WTC11 (cell line): ENCODE measurements at regions of chr5 and their contacts with region 1.

Region 1: DNA sequence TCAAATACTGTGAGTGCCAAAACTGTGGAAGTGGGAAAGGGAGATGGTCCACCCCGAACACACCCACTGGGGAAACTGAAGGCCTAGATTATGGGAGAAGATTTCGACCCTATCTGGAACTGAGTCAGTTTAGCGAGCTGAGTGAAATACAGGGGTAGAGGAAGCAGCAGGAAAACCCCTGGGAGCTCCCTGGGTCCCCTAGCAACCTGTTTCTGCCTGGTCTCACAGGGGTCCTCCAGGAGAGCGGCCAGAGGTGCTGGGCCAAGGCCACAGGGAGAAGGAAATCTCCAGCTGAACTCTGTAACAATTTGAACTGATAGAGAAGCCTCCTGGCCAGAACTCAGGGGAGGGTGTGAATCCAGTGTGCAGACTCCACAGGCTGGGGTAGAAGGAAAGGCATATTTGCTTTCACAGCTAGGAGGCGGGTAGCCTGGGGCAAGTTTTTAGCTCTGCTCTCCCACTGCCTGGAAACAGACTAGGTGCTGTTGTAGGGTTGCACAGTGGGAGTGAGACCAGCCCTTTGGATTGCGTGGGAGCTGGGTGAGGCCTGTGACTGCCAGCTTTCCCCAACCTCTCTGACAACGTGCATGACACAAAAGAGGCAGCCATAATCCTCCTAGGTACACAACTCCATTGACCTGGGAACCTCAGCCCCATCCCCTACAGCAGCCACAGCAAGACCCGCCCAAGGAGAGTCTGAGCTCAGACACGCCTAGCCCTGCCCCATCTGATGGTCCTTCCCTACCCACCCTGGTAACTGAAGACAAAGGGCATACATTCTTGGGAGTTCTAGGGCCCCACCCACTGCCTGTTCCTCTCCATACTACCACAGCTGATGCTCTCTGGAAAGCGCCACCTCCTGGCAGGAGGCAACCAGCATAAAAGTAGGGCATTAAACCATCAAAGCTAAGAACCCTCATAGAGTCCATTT is 78.8 kb upstream of the GPBP1 start:
- DNase-seq: peak; percentile 81
- ATAC-seq: peak; percentile 84
- H3K4me3 Mint-ChIP-seq: no peak overlapping the region
- H3K27ac Mint-ChIP-seq: 0 out of 2 replicates have a peak overlapping the region, but pooled peaks have one; percentile 61
- H3K4me1 Mint-ChIP-seq: peaks cover 12% of the 10 kb centered on the region
- H3K27me3 Mint-ChIP-seq: peaks cover 3% of the 10 kb centered on the region
- CTCF ChIP-seq: peak; percentile 32; the same call in 1 of the 2 replicates

Region 2: DNA sequence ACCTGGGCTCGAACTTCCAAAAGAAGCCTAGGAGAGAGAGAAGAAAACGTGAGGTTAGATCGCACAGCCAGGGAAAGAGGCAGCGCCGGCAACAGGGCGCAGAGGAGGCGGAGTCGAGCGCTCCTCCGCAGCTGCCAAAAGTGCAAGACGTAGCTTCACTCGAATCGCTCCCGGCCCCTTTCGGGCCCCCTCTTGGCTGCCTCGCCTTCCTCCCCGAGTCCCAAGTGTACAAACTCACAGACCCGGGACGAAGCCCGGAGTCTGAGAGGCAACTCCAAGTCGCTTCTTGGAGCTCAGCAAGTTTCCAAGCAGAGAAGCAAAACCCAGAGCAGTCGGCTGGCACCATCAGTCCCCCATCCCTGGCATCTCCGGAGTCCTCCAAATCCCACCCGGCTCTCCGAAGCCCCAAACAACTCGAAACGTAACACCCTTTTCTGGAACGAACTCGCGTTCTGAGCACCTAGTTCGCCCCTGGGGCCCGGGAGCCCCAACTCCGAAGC is 144.3 kb before region 1 on chr5:
- CTCF ChIA-PET with region 1: interaction called, 33 read pairs
- POLR2A ChIA-PET with region 1: interaction called, 5 read pairs
- DNase-seq: peak; percentile 53
- ATAC-seq: peak; percentile 60
- H3K4me3 Mint-ChIP-seq: peak overlapping the region; percentile 95
- H3K27ac Mint-ChIP-seq: peak overlapping the region; percentile 80
- H3K4me1 Mint-ChIP-seq: peaks cover 18% of the 10 kb centered on the region
- H3K27me3 Mint-ChIP-seq: peaks cover 20% of the 10 kb centered on the region
- CTCF ChIP-seq: no peak

Region 3: DNA sequence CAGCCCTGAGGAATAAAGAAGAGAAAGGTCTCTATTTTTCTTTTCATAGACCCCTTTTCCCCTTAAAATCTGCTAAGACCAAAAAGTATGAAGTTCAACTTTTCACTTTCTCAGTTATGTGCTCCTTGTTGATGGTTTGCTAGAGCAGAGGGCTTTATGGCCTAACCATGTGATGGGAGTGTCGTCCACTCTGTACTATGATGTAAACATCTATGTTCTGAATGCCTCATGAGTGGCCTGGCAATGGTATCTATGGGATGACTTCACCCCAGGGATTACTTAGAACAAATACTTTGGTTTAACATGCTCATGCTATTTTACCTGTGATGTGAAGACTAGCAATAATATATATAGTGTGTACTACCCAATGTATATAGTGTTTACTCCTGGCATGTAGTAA is 99.4 kb before region 1 on chr5:
- CTCF ChIA-PET with region 1: interaction called, 12 read pairs
- POLR2A ChIA-PET with region 1: no interaction called
- DNase-seq: no peak
- ATAC-seq: no peak
- H3K4me3 Mint-ChIP-seq: no peak overlapping the region
- H3K27ac Mint-ChIP-seq: no peak overlapping the region
- H3K4me1 Mint-ChIP-seq: no peaks in the 10 kb centered on the region
- H3K27me3 Mint-ChIP-seq: no peaks in the 10 kb centered on the region
- CTCF ChIP-seq: no peak

Region 4: GRCh38 chr5:57106663-57107062 is 11.6 kb after region 1 on chr5:
- CTCF ChIA-PET with region 1: interaction called, 17 read pairs
- POLR2A ChIA-PET with region 1: no interaction called
- DNase-seq: no peak
- ATAC-seq: no peak
- H3K4me3 Mint-ChIP-seq: no peak overlapping the region
- H3K27ac Mint-ChIP-seq: no peak overlapping the region
- H3K4me1 Mint-ChIP-seq: no peaks in the 10 kb centered on the region
- H3K27me3 Mint-ChIP-seq: no peaks in the 10 kb centered on the region; the same call in 1 of the 2 replicates
- CTCF ChIP-seq: no peak